Aorta (tissue), 5 donors: ENCODE measurements at regions of chr21 and their contacts with region 1.

Region 1: DNA sequence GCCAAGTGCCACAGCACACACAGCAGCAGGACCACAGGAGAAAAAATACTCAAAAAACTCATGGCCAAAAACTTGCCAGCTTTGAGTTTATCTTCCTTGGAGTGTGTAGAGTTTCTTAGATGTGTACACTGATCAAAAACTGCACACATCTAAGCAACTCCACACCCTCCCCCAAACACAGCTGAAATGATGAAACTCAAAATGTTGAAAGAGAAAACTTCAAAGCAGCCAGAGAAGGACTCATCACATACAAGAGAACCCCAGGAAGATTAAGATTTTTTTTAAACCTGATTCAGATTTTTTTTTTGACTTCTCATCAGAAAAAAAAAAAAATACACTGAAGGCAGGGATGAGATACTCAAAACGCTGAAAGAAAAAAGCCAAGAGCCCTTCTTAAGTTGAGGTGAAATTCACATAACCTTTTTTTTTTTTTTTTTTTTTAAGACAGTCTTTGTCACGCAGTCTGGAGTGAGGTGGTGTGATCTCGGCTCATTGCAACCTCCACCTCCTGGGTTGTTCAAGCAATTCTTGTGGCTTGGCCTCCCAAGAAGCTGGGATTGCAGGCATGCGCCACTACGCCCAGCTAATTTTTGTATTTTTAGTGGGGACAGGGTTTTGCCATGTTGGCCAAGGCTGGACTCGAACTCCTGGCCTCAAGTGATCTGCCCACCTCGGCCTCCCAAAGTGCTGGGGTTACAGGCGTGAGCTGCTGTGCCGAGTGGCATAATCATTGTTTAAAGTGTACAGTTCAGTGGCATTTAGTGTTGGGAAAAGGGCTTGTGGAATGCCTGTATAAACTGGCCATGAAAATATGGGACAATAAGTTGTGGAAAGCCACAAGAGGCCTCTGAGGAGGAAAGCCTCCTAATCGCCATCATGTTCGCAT is 20.9 kb upstream of the PDXK start:
- DNase-seq: peak in 1 of 2 donors; percentile 15
- ATAC-seq: no peak
- H3K4me3 ChIP-seq: no peak overlapping the region
- H3K27ac ChIP-seq: no peak overlapping the region
- H3K4me1 ChIP-seq: no peaks in the 10 kb centered on the region
- H3K27me3 ChIP-seq: no peaks in the 10 kb centered on the region

Region 2: GRCh38 chr21:43728467-43729390 is 30.7 kb after region 1 on chr21:
- intact Hi-C with region 1: loop called in 1 of 2 experiments (anchors 5 kb)
- DNase-seq: peak; percentile 98
- ATAC-seq: peak; percentile 93
- H3K4me3 ChIP-seq: peak overlapping the region; percentile 29 to 37
- H3K27ac ChIP-seq: peak overlapping the region in 1 of 2 donors; percentile 98
- H3K4me1 ChIP-seq: no peaks in the 10 kb centered on the region
- H3K27me3 ChIP-seq: no peaks in the 10 kb centered on the region